Panc1 (cell line): ENCODE measurements at regions of chr5 and their contacts with region 1.

Region 1: DNA sequence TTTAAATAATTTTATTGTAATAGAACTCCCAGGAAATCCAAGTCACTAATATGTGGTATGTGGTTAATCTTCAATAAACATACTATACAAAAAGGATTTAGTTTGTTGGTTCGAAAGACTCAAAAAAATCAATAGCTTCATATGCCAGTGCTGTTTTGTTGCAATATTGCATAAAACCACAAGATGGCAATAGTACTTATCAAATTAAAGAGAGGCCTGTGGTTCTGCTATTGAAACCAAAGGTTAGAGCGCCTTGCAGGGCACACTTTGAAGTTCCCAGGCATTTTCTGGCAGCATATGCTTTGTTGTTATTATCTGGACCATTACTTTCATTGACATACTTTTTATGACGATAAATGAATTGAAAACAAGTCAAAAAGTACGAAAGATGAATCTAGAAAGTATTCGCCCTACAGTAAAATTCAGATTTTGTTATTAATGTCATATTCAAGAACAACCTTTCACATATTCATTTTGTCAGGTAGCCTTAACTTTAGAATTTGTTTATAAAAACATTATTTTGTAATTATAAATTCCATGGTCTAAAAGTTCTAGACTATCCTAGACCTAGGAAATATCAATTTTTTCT is 316.3 kb downstream of the MCTP1 start:
- DNase-seq: peak; percentile 33
- ATAC-seq: peak; percentile 93
- H3K4me3 ChIP-seq: no peak overlapping the region
- H3K27ac ChIP-seq: no peak overlapping the region
- H3K4me1 ChIP-seq: no peaks in the 10 kb centered on the region
- H3K27me3 ChIP-seq: no peaks in the 10 kb centered on the region
- CTCF ChIP-seq: peak; percentile 65; the same call in 1 of the 2 replicates

Region 2: DNA sequence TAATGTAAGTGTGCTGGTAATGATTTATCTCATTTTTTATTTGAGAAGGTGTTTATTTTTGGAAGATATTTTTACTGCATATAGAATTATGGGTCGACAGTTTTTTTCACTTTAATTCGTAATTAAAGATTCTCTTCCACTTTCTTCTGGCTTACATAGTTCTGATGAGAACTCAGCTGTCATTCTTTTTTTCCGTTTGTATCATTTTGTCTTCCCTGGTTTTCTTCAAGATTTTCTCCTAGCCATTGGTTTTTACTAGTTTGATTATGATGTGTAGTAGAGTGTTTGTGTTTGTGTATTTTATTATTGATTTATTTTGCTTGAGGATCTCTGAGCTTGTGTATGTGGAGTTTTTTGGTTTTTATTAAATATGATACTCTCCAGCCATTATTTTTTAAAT is 328.4 kb before region 1 on chr5:
- CTCF ChIA-PET with region 1: no interaction called
- POLR2A ChIA-PET with region 1: no interaction called
- in situ Hi-C with region 1: no loop called
- intact Hi-C with region 1: no loop called
- DNase-seq: no peak
- ATAC-seq: no peak
- H3K4me3 ChIP-seq: no peak overlapping the region
- H3K27ac ChIP-seq: no peak overlapping the region
- H3K4me1 ChIP-seq: no peaks in the 10 kb centered on the region
- H3K27me3 ChIP-seq: no peaks in the 10 kb centered on the region
- CTCF ChIP-seq: no peak

Region 3: GRCh38 chr5:94870511-94871183 is 98.0 kb before region 1 on chr5:
- CTCF ChIA-PET with region 1: no interaction called
- POLR2A ChIA-PET with region 1: no interaction called
- in situ Hi-C with region 1: no loop called
- intact Hi-C with region 1: no loop called
- DNase-seq: no peak
- ATAC-seq: no peak
- H3K4me3 ChIP-seq: no peak overlapping the region
- H3K27ac ChIP-seq: no peak overlapping the region
- H3K4me1 ChIP-seq: no peaks in the 10 kb centered on the region
- H3K27me3 ChIP-seq: no peaks in the 10 kb centered on the region
- CTCF ChIP-seq: no peak

Region 4: DNA sequence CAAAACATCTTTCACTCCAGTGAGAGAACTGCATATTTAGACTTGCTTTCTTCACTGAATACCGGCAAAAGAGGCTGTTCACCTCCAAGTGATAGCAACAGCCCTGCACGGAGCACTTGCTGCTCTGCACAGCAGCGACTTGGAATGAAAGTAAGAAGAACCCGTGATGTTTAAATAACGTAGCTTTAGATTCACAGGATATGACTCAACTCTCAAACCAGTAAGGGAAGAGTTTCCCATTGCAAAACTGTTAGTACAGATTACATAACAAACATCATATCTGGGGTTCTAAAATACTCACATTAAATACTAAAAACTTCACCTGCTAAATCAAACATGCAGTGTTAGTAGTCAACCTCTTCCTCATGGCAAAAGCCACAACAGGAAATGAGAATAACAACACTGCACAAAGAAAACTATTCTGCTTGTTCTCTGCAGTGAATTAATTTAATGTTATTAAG is 112.9 kb after region 1 on chr5:
- CTCF ChIA-PET with region 1: no interaction called
- POLR2A ChIA-PET with region 1: no interaction called
- in situ Hi-C with region 1: no loop called
- intact Hi-C with region 1: loop called (anchors 5 kb)
- DNase-seq: peak; percentile 94
- ATAC-seq: peak; percentile 97
- H3K4me3 ChIP-seq: peak overlapping the region; percentile 63 to 73
- H3K27ac ChIP-seq: peak overlapping the region; percentile 97
- H3K4me1 ChIP-seq: peaks cover 35% of the 10 kb centered on the region
- H3K27me3 ChIP-seq: no peaks in the 10 kb centered on the region
- CTCF ChIP-seq: no peak

Region 5: DNA sequence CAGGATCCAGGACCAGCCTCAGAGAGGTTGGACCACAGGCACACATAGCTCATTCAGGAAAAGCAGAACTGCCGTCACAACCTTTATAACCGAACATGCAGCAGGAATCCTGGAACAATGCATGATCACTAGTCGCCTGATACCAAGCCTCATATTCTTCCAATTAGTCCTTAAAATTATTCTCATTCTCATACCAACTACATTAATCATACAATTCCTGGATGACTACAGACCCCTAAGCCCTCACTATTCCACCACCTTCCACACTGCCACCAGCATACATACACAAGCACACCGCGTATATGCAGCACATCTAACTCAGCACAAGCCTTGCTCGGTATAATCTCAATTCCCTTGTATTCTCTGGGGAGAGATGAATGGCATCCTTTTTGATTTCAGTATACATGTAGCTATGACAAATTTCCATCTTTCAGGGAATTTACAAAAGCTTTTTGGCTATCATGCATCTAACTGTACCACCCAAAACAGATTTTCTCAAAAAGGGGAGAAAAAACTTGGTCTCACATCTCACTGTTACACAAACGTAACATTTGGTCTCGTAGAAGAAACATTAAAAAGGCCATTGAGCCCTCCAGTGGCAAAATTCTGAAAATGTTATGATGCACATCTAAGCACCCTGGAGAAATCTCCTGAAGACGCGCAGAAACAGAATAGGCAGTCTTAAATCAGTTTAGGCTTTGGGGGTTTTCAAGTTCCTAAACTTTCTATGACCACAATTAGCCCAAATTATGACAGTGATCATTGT is 270.1 kb after region 1 on chr5:
- CTCF ChIA-PET with region 1: interaction called, 3 read pairs
- POLR2A ChIA-PET with region 1: no interaction called
- in situ Hi-C with region 1: no loop called
- intact Hi-C with region 1: loop called (anchors 1 kb)
- DNase-seq: peak; percentile 32
- ATAC-seq: peak; percentile 92
- H3K4me3 ChIP-seq: no peak overlapping the region
- H3K27ac ChIP-seq: no peak overlapping the region
- H3K4me1 ChIP-seq: no peaks in the 10 kb centered on the region
- H3K27me3 ChIP-seq: peaks cover 8% of the 10 kb centered on the region; the same call in 1 of the 2 replicates
- CTCF ChIP-seq: peak; percentile 66

Region 6: DNA sequence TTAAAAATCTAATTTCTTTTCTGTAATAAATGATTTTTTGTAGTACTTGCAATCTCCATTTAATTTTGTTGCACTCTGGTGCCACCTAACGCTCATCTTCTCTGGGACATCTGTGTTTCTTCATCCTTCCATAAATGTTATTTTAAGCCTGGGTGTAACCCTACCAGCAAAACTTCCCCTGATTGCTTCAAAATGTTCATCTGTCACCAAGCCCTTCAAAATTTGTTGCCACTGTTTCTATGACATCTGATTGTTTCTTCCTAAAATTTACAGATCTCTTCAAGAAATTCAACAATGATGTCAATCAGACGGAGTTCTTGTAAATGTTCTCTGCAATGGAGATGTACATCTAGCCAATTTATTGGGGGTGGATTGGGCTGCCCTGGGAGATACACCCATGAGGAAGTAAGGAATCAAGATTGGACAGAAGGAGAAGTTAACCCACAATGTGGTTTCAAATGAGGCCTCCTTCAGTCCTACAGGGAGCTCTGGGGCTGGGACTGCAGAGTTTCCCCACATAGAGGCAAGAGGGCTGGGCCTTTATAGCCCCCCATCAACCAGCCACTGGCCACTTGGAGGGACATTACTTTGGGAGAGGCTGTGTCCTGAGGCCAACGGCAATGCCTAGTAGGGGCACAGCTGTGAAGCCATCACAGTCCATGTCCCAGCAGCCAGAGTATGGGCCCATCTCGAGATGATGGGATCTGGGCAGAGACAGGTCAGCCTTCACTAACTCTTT is 293.0 kb after region 1 on chr5:
- CTCF ChIA-PET with region 1: interaction called, 4 read pairs
- POLR2A ChIA-PET with region 1: no interaction called
- in situ Hi-C with region 1: no loop called
- intact Hi-C with region 1: loop called (anchors 1 kb)
- DNase-seq: peak; percentile 48
- ATAC-seq: peak; percentile 73
- H3K4me3 ChIP-seq: no peak overlapping the region
- H3K27ac ChIP-seq: no peak overlapping the region
- H3K4me1 ChIP-seq: no peaks in the 10 kb centered on the region
- H3K27me3 ChIP-seq: no peaks in the 10 kb centered on the region; the same call in 1 of the 2 replicates
- CTCF ChIP-seq: peak; percentile 73